ENCODE measurements at regions of chr7 and their contacts with region 1.

Region 1: DNA sequence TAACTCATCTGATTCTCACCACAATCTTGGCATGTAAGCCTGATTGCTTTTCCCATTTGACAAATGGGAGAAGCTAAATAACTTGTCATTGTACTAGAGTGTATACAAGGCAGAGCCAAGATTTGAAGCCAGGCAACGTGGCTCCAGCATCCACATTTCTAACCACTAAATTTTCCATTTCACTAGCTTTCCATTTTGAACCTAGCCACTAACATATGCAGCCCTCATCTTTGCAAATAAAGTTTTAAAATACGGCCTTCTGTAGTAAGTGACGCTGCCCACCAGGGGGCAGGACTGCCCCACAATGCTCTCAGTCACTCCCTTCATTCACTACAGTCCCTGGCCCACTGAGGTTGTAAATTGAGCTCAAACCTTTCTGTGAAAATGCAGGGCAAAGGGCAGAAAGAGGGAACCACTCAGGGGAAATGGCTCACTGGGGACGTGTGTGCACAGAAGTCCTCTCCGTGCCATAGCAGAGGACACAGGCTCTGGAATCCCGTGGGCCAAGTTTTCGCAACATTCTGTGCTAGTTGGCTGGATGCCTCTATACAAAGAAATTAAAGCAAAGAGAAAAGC is 315.7 kb downstream of the TNS3 start:
- DNase-seq: peak; percentile 75
- H3K4me3 Mint-ChIP-seq: no peak overlapping the region
- H3K27ac Mint-ChIP-seq: no peak overlapping the region
- H3K4me1 Mint-ChIP-seq: peaks cover 11% of the 10 kb centered on the region
- H3K27me3 Mint-ChIP-seq: no peaks in the 10 kb centered on the region
- CTCF ChIP-seq: peak; percentile 88

Region 2: DNA sequence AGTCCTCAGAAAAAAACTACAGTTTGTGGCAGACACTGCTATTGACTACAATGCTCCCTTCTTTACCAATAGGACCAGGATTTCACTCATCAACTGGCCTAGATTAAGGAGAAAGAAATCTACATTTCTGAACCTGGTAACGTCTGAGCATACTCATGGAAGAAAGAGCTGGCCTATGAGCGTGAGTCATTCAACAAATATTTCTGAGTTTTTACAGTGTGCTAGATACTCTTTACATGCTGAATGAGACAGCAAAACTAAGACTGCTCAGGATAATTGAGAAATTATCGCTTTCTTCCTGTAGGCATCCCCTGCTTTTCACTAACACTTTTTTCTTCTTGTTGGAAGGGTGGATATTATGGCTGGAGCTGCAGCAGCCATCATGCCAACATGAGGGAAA is 294.0 kb before region 1 on chr7:
- CTCF ChIA-PET with region 1: no interaction called
- POLR2A ChIA-PET with region 1: no interaction called
- intact Hi-C with region 1: no loop called
- DNase-seq: peak; percentile 62
- H3K4me3 Mint-ChIP-seq: no peak overlapping the region
- H3K27ac Mint-ChIP-seq: peak overlapping the region; percentile 86
- H3K4me1 Mint-ChIP-seq: peaks cover 32% of the 10 kb centered on the region
- H3K27me3 Mint-ChIP-seq: no peaks in the 10 kb centered on the region
- CTCF ChIP-seq: no peak

Region 3: DNA sequence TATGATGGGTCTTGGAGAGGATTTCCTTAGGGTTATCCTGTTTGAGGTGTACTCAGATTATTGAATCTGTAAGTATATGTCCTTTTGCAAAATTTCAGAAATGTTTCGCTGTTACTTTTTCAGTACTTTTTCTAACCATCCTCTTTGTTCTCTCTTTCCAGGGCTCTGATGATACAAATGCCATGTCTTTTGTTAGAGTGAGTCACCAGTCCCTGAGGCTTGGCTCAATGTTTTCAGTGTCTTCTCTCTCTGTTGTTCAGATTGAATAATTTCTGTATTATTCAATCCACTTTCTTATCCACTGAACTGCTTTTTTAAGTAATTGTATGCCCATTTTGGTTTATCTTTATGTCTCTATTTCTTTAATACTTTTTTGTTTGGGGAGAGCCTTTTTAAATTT is 133.7 kb before region 1 on chr7:
- CTCF ChIA-PET with region 1: no interaction called
- POLR2A ChIA-PET with region 1: no interaction called
- intact Hi-C with region 1: no loop called
- DNase-seq: no peak
- H3K4me3 Mint-ChIP-seq: no peak overlapping the region
- H3K27ac Mint-ChIP-seq: no peak overlapping the region
- H3K4me1 Mint-ChIP-seq: peaks cover 8% of the 10 kb centered on the region
- H3K27me3 Mint-ChIP-seq: peaks cover 24% of the 10 kb centered on the region
- CTCF ChIP-seq: no peak

Region 4: DNA sequence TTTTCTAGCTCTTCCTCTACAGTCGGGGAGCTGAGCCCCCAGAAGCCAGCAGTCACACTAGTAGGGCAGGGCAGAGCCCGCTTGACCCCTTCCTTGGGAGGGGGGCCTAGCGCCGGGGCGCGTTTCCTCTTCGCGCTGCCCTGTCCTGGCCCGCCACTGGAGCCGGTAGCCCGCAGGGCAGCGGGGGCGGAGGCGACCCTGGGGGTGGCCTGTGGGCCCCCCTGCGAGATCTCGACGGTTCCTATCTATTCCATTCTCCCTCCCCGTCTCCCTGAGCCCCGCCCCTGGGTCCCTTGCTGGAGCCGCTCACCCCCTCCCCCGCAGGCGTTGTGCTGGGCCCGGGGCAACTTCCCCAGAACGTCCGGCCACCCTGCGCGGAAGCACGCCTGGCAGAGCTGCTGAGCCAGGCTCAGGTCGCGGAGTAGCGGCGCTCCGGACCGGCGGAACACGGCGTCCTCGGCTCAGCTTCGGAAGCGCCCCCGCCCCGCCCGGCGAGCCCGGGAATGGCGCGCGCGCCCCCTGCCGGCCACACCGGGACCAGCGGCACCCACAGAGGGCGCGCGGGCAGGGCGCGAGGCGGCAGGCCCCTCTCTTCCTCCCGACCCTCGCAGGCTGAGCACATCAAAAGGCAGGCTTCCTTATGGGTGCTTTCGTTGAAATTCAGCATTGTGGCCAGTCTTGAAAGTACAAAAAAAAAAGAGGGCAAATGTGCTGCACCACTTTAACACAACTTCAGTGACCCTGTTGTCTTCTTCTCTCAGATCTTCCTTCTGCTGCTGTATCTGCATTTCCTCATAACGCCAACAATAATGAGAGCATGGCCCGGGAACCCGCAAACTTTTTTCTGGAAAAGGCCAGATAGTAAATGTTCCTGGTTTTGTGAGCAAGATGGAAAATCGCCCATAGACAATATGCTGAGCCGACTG is 11.9 kb before region 1 on chr7:
- CTCF ChIA-PET with region 1: interaction called, 27 read pairs
- POLR2A ChIA-PET with region 1: interaction called, 3 read pairs
- intact Hi-C with region 1: no loop called
- DNase-seq: peak; percentile 55
- H3K4me3 Mint-ChIP-seq: peak overlapping the region; percentile 67
- H3K27ac Mint-ChIP-seq: peak overlapping the region; percentile 14
- H3K4me1 Mint-ChIP-seq: peaks cover 6% of the 10 kb centered on the region
- H3K27me3 Mint-ChIP-seq: no peaks in the 10 kb centered on the region
- CTCF ChIP-seq: peak; percentile 88

Region 5: DNA sequence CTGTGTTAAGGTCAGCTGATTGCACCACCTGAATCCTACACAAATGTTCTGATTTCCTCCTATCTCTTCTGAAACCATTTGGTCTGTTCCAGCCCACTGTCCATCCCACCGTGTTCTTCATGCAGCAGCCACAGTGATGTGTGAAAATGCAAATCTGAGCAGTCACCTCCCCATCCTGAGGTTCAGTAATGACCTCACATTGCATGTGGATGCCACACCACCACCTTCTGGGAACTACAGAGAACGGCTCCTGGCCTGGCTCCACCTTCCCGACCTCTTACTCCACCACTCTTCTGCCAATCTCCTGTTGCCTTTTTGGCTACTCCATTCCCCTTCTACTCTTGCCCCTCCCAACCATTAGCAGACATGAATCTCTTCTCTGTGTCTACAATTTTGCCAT is 71.3 kb after region 1 on chr7:
- CTCF ChIA-PET with region 1: interaction called, 10 read pairs
- POLR2A ChIA-PET with region 1: interaction called, 12 read pairs
- intact Hi-C with region 1: loop called (anchors 1 kb)
- DNase-seq: peak; percentile 64
- H3K4me3 Mint-ChIP-seq: no peak overlapping the region
- H3K27ac Mint-ChIP-seq: peak overlapping the region; percentile 2
- H3K4me1 Mint-ChIP-seq: peaks cover 27% of the 10 kb centered on the region
- H3K27me3 Mint-ChIP-seq: no peaks in the 10 kb centered on the region
- CTCF ChIP-seq: no peak

Region 6: GRCh38 chr7:47435889-47436312 is 169.7 kb after region 1 on chr7:
- CTCF ChIA-PET with region 1: interaction called, 37 read pairs
- POLR2A ChIA-PET with region 1: no interaction called
- intact Hi-C with region 1: loop called (anchors 1 kb)
- DNase-seq: peak; percentile 65
- H3K4me3 Mint-ChIP-seq: no peak overlapping the region
- H3K27ac Mint-ChIP-seq: no peak overlapping the region
- H3K4me1 Mint-ChIP-seq: peaks cover 12% of the 10 kb centered on the region
- H3K27me3 Mint-ChIP-seq: no peaks in the 10 kb centered on the region
- CTCF ChIP-seq: peak; percentile 59

Region 7: DNA sequence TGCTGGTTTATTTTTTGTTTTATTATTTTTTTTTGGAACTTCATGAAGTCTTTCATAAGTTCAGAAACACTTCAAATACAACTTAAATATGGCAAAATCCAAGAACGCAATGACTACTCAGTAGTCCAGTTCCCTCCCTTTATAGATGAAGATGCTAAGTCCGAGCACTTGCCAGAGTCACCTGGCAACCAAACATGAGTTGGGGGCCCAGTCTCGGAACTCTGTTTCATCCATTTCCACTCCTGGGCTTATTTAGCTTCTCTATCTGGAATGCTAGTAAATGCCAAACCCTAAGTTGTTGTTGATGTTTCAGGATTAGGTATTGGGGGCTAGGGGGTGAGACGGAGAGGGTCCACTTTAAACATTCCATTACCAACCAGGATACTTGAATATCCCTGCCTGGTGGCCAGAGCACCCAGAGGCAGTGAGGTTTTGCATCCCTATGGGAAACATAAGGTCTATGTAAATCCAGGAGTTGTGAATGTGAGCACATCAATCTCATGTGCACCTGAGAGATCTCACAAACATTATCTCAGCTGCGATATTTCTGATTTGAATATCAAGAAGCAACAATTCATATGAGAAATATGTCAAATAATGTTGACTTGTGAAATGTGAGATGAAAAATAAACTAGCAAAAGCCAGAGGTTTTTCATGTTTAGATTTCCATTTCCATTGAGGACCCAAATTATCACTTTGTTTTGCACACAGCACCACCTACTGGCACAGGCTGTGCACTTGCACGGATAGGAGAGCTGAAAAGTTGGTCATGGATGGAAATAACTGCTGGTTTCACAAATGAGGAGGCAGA is 552.8 kb after region 1 on chr7:
- CTCF ChIA-PET with region 1: interaction called, 37 read pairs
- POLR2A ChIA-PET with region 1: interaction called, 6 read pairs
- intact Hi-C with region 1: loop called (anchors 1 kb)
- DNase-seq: peak; percentile 80
- H3K4me3 Mint-ChIP-seq: no peak overlapping the region
- H3K27ac Mint-ChIP-seq: no peak overlapping the region
- H3K4me1 Mint-ChIP-seq: peaks cover 7% of the 10 kb centered on the region
- H3K27me3 Mint-ChIP-seq: no peaks in the 10 kb centered on the region
- CTCF ChIP-seq: peak; percentile 94

Region 8: DNA sequence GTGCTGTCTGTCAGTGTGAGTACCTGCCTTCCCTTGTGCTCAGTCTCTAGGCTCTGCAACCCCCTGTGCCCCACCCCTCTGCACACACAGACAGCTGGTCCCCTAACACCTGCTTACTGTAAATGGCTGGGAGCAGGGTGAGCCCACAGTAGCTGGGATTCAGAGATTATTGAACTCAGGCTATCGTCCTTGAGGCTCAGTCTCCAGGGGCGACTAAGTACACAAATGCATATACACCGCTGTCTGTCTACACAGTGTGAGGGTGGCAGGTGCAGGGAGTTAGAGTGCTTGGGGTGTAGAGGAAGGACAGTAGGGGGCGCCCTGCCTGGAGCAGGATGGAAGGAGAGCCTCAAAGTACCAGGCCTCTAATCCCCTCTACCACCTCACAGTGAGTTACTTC is 835.7 kb after region 1 on chr7:
- CTCF ChIA-PET with region 1: no interaction called
- POLR2A ChIA-PET with region 1: no interaction called
- intact Hi-C with region 1: no loop called
- DNase-seq: no peak
- H3K4me3 Mint-ChIP-seq: no peak overlapping the region
- H3K27ac Mint-ChIP-seq: no peak overlapping the region
- H3K4me1 Mint-ChIP-seq: peaks cover 23% of the 10 kb centered on the region
- H3K27me3 Mint-ChIP-seq: no peaks in the 10 kb centered on the region
- CTCF ChIP-seq: peak; percentile 23

Region 9: DNA sequence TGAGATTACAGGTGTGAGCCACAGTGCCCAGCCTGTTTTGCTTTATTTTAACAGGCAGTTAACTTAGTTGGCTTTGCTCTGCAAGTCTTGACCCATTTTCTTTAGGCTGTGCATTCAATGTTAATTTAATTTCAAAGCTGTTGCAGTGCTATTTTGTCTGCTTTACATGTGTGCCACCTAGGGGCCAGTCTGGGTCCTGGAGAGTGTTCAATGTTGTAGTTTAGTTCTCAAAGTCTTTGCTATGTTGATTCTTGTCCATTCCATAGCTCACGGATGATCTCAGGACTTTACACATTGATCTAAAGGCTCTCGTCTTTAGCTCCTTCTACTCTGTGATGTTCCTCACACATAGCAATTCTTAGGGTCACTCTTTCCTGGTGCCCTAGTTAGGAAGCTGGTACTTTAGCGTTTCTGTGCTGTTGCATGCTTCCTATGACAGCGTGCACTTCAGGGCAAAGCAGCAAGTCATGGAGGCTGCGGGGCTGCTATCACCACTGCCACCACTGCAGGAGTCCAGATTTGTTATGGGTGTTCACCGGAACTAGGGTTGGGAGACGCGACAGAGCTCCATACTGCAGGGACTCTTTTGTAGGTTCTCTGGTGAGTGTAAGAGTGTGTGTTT is 888.7 kb after region 1 on chr7:
- CTCF ChIA-PET with region 1: no interaction called
- POLR2A ChIA-PET with region 1: no interaction called
- intact Hi-C with region 1: loop called (anchors 10 kb)
- DNase-seq: peak; percentile 59
- H3K4me3 Mint-ChIP-seq: no peak overlapping the region
- H3K27ac Mint-ChIP-seq: no peak overlapping the region
- H3K4me1 Mint-ChIP-seq: no peaks in the 10 kb centered on the region
- H3K27me3 Mint-ChIP-seq: peaks cover 47% of the 10 kb centered on the region
- CTCF ChIP-seq: peak; percentile 79

Measured in MCF 10A (cell line).